Left cardiac atrium (tissue), 4 donors: ENCODE measurements at regions of chr14 and their contacts with region 1.

Region 1: GRCh38 chr14:55094321-55095157 is 34.5 kb upstream of the LGALS3 start:
- DNase-seq: no peak
- ATAC-seq: no peak

Region 2: DNA sequence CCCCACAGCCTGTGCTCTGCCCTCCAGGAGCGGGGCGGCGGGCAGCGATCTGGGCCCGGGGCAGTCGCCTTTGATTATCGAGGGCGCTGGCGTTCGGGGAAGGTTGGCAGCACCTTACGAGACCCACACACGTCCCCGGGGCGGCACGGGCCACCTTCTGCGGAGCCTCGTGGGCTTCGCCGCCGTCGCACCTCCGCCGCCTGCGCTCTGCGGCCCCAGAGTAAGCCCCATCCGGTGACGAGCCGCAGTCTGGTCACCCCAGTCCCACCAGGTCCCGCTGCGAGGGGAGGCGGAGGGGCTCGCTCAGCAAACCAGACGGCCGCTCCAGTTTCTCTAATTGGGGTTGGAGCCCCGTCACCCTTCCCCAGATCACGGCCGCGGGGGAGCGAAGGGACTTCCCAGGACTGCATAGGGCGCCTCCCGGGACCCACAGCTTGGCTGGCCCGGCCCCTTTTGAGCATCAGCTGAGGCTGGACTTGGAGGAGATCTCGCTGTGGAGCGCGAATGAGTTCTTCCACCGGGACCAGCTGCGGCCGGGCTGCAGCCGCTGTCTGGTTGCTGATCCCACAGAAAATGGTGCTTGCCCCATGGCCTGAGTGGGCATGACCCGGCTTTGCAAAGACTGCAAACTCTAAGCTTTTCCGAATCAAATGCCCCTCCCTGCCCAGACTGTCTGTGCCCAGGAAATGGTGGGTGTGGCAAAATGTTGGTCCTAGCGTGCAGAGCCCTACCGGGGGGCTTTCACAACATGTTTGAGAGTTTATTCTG is 35.1 kb after region 1 on chr14:
- intact Hi-C with region 1: loop called in 1 of 2 experiments (anchors 5 kb)
- DNase-seq: peak; percentile 78
- ATAC-seq: peak; percentile 73 to 77

Region 3: DNA sequence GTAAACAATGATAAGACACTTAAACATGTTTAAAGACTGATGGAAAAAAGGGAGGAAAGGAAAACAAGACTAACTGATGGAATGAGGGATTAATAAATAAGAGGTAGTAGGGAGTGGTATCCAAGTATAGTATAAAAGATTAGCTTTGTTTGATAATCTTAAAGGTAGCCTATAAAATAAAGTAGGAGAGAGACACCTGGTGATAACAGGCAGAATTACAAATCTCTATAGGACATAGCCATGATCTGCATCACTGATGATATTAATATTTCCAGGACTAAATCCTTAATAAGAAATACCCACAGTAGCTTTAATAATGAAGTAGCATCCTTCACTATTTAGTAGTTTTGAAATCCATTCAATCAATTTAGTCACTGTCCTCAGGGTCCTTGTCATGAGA is 66.5 kb after region 1 on chr14:
- intact Hi-C with region 1: loop called (anchors 1 to 2 kb)
- DNase-seq: no peak
- ATAC-seq: peak; percentile 61 to 70

Region 4: GRCh38 chr14:55285048-55285652 is 190.6 kb after region 1 on chr14:
- intact Hi-C with region 1: no loop called
- DNase-seq: no peak
- ATAC-seq: no peak